ENCODE measurements at regions of chr12 and their contacts with region 1.

Region 1: GRCh38 chr12:70227911-70228310 is 15.3 kb upstream of the CNOT2 start:
- DNase-seq: no peak

Region 2: DNA sequence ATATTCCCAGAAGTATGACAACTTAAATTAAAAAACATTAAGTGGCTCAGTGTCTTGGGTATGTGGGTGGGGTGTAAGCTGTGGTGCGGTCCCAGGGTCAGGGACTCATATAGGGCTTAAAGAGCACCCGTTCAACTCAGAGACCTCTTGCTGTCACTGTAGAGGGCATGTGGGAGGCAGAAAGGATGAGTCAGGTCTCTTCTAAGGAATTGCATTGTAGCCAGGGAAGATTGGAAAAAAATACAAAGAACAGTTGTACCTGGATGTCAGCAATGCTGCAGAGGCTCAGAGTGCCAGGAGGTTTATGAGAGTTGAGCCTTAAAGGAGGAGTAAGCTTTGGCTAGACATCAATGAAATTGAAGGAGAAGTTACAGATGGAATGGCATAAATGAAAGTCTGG is 298.8 kb before region 1 on chr12:
- intact Hi-C with region 1: loop called (anchors 10 kb)
- DNase-seq: no peak

Region 3: DNA sequence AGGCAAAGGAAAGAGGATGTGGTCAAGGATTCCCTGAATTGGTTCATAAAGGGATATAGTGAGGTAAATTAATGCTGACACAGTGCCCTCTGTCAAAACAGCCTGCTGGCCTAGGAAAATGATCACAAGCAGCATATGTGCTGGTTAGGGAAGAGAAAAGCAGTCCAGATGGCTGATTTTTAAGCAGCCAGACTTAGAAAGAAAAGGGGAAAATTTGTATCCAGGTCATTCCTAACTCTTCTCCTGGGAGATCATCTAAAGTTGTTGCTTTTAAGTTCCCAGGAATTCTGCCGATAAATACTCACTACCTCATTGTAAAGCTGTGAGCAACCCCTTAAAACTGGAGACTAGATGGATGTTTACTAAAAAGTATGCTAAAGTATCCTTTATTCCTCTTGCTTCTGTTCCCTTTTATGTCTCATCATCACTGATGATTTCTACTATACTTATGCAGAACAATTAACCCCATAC is 31.1 kb before region 1 on chr12:
- intact Hi-C with region 1: no loop called
- DNase-seq: no peak

Measured in cardiac septum (tissue), 1 donor.